ENCODE measurements at regions of chr5 and their contacts with region 1.

Region 1: DNA sequence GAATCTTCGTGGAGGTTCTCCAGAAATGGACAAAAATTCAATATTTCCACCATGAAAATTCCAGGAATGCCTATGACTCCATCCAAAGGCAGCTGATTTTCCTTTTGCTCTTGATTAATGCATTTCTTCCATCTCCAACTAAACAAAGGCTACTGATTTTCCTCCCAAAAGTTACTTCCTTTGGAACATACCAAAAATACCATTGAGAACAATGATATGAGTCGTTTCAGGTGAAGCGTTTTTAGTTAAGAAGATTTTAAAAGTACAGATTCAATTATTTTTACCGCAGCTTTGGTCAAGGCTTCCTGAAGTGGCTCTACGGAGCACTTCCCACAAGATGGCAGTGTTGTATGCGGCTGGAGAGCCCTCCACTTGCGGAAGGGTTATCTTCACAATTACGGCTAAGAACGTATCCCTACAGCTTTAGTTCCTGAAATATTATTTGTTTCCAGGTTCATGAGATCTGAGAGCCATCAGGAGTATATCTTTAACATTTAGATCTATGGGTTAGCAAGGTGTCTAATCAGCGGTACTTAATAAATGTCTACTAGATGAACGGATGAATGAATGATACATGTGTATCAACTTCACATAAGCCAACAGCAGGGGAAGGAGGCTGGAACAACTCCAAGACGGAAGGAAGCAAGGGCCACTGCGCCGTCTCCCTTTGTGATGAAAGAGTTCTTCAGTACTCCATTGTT is 35.9 kb upstream of the ARSB start:
- DNase-seq: peak; percentile 28 to 66
- ATAC-seq: peak; percentile 88 to 92; a peak in 5 of 6 replicates
- H3K4me3 ChIP-seq: no peak overlapping the region
- H3K27ac ChIP-seq: no peak overlapping the region
- H3K4me1 ChIP-seq: peaks cover 15% of the 10 kb centered on the region; the same call in 2 of the 3 replicates
- CTCF ChIP-seq: peak; percentile 91
- EP300 ChIP-seq: no peak
- POLR2A ChIP-seq: no peak
- RAD21 ChIP-seq: peak; percentile 82 to 86

Region 2: DNA sequence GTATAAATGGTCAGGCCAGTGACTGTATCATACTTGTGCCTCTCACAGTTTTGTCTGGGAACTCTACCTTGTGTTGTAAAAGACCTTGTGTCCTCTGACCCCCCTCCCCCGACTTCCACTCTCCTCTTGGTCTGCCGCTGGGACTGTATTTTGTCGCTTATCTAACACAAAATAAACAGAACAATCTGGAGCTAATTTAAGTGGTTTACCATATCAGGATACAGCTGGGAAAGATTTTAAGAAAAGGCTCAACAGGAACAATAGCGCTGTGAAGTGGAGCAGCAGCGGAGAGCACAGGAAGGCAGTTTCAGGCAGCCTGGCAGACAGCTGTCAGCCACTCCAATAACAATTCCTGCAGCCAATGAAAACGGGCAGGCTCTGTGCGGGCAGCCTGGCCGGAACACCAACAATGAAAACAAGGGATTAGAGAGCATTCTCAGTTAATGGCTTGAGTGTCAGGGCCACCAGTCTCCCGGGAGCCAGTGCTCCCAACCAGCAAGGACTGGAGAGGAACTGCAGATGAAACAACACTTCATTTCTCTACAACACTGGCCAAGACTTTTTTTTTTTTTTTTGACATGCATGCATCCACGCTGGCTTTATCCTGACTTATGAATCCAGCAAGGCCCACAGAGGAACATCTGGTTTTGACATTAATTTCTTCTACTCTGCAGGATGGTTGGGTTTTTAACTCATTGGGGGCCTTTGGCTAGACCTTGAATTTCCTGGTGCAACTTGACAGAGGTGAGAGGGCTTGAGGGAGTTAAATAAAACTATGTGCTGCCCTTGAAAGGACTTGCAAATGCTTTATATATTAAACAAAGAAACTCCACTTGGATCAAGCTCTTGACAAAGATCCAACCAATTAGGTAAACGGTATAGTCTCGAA is 112.6 kb before region 1 on chr5:
- CTCF ChIA-PET with region 1: no interaction called
- POLR2A ChIA-PET with region 1: no interaction called
- DNase-seq: no peak
- ATAC-seq: no peak
- H3K4me3 ChIP-seq: no peak overlapping the region
- H3K27ac ChIP-seq: no peak overlapping the region
- H3K4me1 ChIP-seq: no peaks in the 10 kb centered on the region
- CTCF ChIP-seq: no peak
- EP300 ChIP-seq: no peak
- POLR2A ChIP-seq: no peak
- RAD21 ChIP-seq: no peak

Region 3: GRCh38 chr5:78984439-78985115 is 36.4 kb before region 1 on chr5:
- CTCF ChIA-PET with region 1: interaction called, 10 read pairs
- POLR2A ChIA-PET with region 1: interaction called, 13 read pairs
- DNase-seq: peak; percentile 85 to 92
- ATAC-seq: peak; percentile 84 to 91
- H3K4me3 ChIP-seq: peak overlapping the region; percentile 82
- H3K27ac ChIP-seq: peak overlapping the region; percentile 97 to 98
- H3K4me1 ChIP-seq: peaks cover 35% of the 10 kb centered on the region
- CTCF ChIP-seq: no peak
- EP300 ChIP-seq: no peak
- POLR2A ChIP-seq: peak; percentile 86
- RAD21 ChIP-seq: no peak

Region 4: DNA sequence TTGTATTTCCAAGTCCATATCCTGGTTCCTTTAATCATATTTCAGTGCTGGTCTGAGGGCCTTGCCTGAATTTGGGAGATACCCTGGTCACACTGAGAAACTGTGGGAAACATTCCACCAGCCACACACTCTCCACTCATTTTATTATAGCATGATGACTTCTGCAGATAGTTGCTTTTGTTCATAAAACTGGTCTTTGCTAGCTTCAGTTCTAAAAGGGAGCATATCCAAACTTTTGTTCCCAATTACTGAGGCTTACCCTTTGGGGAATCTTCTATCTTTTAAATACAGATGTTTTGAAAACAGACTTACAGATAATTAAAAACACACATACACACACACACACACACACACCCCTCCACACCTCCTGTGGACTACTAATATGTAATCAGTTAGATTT is 27.4 kb after region 1 on chr5:
- CTCF ChIA-PET with region 1: interaction called, 26 read pairs
- POLR2A ChIA-PET with region 1: no interaction called
- DNase-seq: no peak
- ATAC-seq: no peak
- H3K4me3 ChIP-seq: no peak overlapping the region
- H3K27ac ChIP-seq: no peak overlapping the region
- H3K4me1 ChIP-seq: no peaks in the 10 kb centered on the region
- CTCF ChIP-seq: no peak
- EP300 ChIP-seq: no peak
- POLR2A ChIP-seq: no peak
- RAD21 ChIP-seq: no peak

Region 5: GRCh38 chr5:79133657-79134451 is 112.8 kb after region 1 on chr5:
- CTCF ChIA-PET with region 1: interaction called, 354 read pairs
- POLR2A ChIA-PET with region 1: interaction called, 10 read pairs
- DNase-seq: peak; percentile 41 to 83
- ATAC-seq: peak; percentile 94 to 95
- H3K4me3 ChIP-seq: peak overlapping the region; percentile 33
- H3K27ac ChIP-seq: peak overlapping the region; percentile 75 to 84
- H3K4me1 ChIP-seq: peaks cover 4% of the 10 kb centered on the region; the same call in 2 of the 3 replicates
- CTCF ChIP-seq: peak; percentile 71
- EP300 ChIP-seq: no peak
- POLR2A ChIP-seq: no peak
- RAD21 ChIP-seq: peak; percentile 81 to 84

Region 6: DNA sequence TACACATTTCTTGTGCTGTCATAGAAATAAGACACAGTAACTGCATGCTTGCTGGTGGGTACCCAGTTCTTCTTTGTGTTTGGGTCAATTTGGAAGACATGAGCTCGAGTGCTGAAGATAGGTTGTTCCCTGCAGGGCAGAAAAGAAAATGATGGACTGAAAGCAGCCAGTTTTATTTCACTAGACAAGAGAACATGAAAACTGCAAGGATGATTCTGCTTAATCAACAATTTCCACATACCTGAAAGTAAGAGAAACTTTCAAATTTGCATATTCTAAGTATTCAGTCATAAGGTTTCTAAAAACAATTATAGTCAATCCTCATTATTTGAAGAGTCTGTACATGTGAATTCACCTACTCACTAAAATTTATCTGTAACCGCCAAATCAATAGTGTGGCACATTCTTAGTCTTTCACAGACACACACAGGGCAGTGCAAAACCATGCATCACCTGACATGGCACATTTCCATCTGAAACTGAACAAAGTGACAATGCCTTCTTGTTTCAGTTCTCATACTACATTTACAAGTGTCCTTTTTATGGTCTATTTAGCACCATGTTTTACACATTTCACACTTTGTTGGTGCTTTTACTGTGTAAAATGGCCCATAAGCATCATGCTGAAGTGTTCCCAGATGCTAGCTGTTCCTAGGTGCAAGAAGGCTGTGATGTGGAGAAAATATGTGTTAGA is 436.0 kb after region 1 on chr5:
- CTCF ChIA-PET with region 1: interaction called, 146 read pairs
- POLR2A ChIA-PET with region 1: no interaction called
- DNase-seq: no peak
- ATAC-seq: no peak
- H3K4me3 ChIP-seq: no peak overlapping the region
- H3K27ac ChIP-seq: no peak overlapping the region
- H3K4me1 ChIP-seq: no peaks in the 10 kb centered on the region
- CTCF ChIP-seq: no peak
- EP300 ChIP-seq: no peak
- POLR2A ChIP-seq: no peak
- RAD21 ChIP-seq: no peak

Region 7: GRCh38 chr5:79857714-79858409 is 836.9 kb after region 1 on chr5:
- CTCF ChIA-PET with region 1: interaction called, 12 read pairs
- POLR2A ChIA-PET with region 1: no interaction called
- DNase-seq: peak; percentile 32 to 56
- ATAC-seq: peak; percentile 41 to 83; a peak in 4 of 6 replicates
- H3K4me3 ChIP-seq: no peak overlapping the region
- H3K27ac ChIP-seq: no peak overlapping the region
- H3K4me1 ChIP-seq: no peaks in the 10 kb centered on the region
- CTCF ChIP-seq: peak; percentile 87
- EP300 ChIP-seq: no peak
- POLR2A ChIP-seq: no peak
- RAD21 ChIP-seq: peak; percentile 75 to 78

Measured in A549 (cell line).